ENCODE measurements at regions of chr22 and their contacts with region 1.

Region 1: DNA sequence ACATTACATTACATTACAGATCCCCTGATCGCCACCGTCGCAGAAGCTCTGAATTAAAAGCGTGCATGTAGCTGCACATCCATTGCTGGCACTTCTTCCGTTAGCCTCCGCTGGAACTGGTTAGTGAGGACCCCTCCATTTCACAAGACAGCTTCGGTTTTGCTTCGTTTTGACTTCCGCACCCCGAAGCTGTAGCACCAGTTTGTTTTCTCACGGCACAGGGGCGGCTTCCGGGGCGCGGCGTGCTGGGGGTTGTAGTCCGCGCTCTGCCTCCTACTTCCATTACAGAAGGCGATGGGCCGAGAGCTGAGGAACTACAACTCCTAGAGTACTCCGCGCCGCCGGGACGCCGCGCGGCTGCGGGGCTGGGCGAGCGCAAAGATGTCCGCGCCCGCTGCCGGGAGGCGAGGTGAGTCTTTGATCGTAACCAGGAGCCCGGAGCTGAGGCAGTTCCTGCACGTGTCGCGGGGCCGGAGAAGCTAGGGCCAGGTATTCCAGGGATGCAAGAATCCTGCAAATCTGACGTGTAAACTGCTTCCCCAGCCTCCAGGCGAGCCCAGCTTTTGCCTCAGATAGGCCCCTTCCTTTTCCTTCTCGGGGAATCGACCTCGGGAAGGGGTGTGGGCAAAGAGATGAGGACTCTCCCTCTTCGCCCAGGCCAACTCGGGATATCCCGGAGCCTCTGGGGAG is at the start of gene PEX26:
- DNase-seq: peak; percentile 95
- H3K4me3 Mint-ChIP-seq: peak within 1 kb of the TSS; percentile 90
- H3K27ac Mint-ChIP-seq: peak within 1 kb of the TSS; percentile 92
- H3K4me1 Mint-ChIP-seq: peaks cover 50% of the 10 kb centered on the region
- H3K27me3 Mint-ChIP-seq: peaks cover 2% of the 10 kb centered on the region
- total RNA-seq, gene PEX26: 50.0 and 54.4 TPM in 2 replicates

Region 2: DNA sequence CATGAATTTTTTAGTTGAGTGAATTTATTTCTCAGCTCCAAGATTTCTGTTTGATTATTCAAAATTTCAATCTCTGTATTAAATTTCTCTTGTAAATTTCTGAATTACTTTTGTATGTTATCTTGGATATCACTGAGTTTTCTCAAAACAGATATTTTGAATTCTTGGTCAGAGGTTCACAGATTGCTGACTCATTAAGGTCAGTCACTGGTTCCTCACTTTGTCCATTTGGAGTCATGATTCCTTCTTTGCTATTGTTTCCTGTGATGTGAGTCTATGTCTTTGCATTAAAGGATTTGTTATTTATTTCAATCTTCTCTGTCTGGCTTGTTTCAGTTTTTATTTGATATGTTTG is 1003.2 kb before region 1 on chr22:
- intact Hi-C with region 1: loop called (anchors 1 kb)
- DNase-seq: no peak
- H3K4me3 Mint-ChIP-seq: no peak overlapping the region
- H3K27ac Mint-ChIP-seq: no peak overlapping the region
- H3K4me1 Mint-ChIP-seq: peaks cover 21% of the 10 kb centered on the region
- H3K27me3 Mint-ChIP-seq: peaks cover 36% of the 10 kb centered on the region

Region 3: DNA sequence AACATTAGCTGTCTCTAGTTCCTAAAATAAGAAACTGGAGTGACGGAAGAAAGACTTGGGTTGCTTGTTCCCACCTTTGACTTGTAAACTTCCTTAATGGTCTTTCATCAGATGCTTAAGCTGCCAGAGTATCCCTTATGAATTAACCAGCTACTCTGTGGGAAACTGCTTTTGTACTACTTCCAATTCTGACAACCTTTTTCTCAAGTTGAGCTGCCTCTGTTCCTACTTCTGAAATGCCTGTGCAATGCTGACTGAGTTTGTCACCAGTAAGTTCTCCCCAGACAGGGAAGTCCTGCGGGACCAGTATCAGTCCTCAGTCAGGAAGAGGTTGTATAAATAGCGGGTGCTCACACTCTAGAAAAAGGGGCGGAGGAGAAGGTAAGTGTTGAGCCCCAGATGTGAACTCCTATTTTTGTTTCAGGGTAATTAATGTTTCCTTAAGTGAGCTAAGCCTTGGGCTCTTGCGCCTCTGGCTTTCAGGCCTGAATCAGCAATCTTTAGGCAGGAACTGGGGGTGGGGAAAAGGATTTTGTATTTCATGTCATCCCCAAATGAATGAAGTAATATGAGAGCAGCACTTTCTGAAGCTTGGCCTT is 641.3 kb before region 1 on chr22:
- intact Hi-C with region 1: no loop called
- DNase-seq: no peak
- H3K4me3 Mint-ChIP-seq: no peak overlapping the region
- H3K27ac Mint-ChIP-seq: no peak overlapping the region
- H3K4me1 Mint-ChIP-seq: no peaks in the 10 kb centered on the region
- H3K27me3 Mint-ChIP-seq: peaks cover 15% of the 10 kb centered on the region

Region 4: DNA sequence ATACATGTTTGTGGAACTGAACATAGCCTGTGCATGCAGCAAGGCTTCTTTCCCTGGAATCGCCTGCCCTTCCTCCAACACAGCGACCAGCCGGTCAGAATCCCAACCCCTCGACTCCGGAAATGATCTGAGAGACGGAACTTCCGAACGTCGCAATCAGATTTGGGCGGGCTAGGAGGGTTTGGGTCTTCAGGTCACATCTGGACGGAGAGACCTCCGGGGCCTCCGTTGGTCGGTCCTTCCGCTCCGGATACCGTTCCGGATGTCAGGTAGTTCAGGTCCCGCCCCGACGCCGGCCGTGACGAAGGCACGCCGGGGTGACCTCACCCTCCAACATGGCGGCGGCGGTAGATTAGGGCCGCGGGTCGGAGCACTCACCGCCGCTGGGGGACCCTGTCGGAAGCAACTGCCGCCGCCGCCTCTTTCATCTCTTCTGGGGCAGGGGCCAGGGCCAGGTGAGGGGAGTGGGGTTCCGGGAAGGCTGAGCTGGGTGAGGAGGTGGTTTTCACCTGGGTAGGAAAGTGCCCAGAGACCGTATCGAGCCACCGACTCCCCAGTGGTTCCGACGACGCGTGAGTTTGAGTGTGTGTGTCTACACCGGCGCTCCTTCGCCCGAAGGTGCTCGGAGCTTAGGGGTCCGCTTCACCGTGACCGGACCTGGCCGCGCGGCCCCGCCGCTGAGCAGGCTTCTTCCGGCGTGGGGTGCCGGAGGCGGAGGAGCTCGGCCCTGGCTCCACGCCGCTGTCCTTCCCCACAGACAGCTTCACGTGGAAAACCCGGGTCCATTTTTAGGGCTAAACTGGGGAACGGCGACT is 439.1 kb before region 1 on chr22 and contains the start of gene BCL2L13:
- intact Hi-C with region 1: loop called (anchors 1 kb)
- DNase-seq: peak; percentile 88
- H3K4me3 Mint-ChIP-seq: peak within 1 kb of the TSS; percentile 94
- H3K27ac Mint-ChIP-seq: peak within 1 kb of the TSS; percentile 95
- H3K4me1 Mint-ChIP-seq: peaks cover 29% of the 10 kb centered on the region
- H3K27me3 Mint-ChIP-seq: no peaks in the 10 kb centered on the region
- total RNA-seq, gene BCL2L13: 34.6 and 35.9 TPM in 2 replicates

Region 5: DNA sequence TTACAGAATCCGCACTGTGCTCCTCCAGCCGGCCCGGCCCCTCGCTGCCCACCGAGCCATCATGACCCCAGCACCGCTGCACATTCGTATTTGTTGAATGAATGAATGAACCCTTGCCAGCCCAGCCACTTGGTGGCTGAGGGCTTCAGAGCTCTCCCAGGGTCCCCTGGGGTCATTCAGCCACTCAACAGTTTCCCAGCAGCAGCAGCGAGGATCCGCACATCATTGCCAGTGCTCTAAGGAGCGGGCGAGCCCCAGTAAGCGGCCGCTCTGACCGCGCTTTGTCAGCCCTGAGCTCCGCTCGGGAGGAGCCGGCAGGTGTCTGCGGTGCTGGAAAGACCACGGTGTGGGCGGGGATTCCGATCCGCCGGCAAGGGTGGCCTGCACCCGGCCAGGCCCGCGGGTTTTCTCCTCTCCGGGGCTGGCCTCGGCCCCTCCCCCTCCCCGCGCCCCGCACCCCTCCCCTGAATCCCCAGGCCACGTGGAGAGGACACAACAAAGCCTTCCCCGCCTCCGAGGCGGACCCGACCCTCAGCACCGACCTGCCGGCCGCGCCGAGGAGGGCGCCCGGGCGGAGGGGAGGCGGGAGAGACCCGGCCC is 304.1 kb before region 1 on chr22:
- intact Hi-C with region 1: loop called (anchors 2 kb)
- DNase-seq: peak; percentile 67
- H3K4me3 Mint-ChIP-seq: peak overlapping the region; percentile 79
- H3K27ac Mint-ChIP-seq: peak overlapping the region; percentile 65
- H3K4me1 Mint-ChIP-seq: peaks cover 63% of the 10 kb centered on the region
- H3K27me3 Mint-ChIP-seq: peaks cover 14% of the 10 kb centered on the region

Region 6: DNA sequence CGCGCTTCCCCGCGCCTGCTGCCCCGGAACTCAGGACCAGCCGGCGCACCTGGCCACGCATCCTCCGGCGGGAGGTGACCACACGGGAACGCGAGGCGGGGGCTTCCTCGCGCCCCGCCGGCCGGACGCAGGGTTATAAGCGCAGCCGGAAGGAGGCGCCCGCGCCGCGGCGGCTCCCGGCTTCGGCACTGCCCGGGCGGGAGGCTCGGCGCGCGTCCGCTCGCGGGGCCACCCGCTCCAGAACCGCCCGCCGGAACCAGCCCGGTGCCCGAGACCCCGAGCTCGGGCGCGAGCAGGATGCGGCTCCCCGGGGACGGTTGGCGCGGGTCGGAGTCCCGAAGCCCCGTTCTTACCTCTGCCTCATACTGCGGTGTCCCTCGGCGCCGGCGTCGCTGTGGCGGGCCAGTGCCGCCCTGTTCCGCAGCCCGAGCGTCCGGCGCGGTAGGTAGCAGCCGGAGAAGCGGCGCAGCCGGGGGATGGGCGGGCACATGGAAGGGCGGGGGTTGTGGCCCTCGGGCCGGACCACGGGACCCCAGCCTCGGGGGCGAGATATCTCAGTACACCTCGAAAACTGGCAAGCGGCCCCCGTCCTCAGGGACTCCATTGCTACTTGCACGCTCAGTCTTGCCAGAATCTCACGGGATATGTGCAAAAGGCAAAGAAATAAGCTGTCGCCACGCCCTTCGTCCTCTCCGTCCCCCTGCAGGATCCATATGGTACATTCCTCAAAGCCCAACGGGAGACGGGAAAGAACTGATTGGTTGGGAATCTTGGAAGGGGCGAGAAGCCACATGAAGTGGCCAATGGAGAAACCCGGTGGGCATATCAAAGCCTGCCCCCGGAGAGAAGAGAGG is 76.5 kb before region 1 on chr22:
- intact Hi-C with region 1: loop called (anchors 1 kb)
- DNase-seq: peak; percentile 67
- H3K4me3 Mint-ChIP-seq: peak overlapping the region; percentile 92
- H3K27ac Mint-ChIP-seq: peak overlapping the region; percentile 95
- H3K4me1 Mint-ChIP-seq: peaks cover 44% of the 10 kb centered on the region
- H3K27me3 Mint-ChIP-seq: peaks cover 29% of the 10 kb centered on the region

Region 7: DNA sequence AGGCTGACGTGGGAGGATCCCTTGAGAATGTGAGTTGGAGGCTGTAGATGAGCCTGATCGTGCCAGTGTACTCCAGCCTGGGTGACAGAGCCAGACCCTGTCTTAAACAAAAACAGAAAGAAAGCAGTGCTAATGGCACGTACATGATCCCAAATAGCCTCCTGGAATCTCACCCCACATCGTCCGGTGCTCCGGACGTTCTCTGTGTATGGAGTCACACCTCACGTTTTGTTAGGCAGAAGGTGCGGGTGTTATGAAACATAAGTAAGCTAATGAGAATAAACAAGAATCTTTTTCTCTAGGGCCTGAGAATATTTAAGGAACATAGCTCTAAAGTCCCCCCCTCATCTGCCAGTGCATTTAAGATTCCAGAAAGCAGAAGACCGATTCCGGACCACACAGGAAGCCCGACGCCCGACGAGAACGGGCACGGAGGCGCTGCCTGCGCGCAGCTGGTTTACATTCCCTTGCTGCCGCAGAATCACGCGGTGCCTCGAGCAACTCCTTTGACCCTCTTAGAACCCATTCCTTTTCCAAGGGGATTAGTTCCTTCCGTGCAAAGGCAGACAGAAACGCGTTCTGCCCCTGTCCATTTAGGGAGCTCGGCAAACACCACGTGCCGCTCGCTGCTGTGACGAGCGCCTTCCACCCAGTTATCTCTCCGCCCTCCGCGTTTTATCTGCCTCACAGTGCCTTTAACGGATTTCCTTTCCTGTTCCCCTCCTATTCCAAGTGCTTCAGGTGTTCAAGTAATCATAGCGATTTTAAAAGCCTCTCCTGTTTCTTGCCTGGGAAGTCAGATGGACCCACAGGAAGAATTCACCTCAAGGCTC is 29.5 kb before region 1 on chr22:
- intact Hi-C with region 1: no loop called
- DNase-seq: no peak
- H3K4me3 Mint-ChIP-seq: no peak overlapping the region
- H3K27ac Mint-ChIP-seq: no peak overlapping the region
- H3K4me1 Mint-ChIP-seq: no peaks in the 10 kb centered on the region
- H3K27me3 Mint-ChIP-seq: peaks cover 9% of the 10 kb centered on the region

Region 8: GRCh38 chr22:18104566-18104965 is 26.8 kb after region 1 on chr22:
- intact Hi-C with region 1: loop called (anchors 1 kb)
- DNase-seq: no peak
- H3K4me3 Mint-ChIP-seq: no peak overlapping the region
- H3K27ac Mint-ChIP-seq: peak overlapping the region; percentile 56
- H3K4me1 Mint-ChIP-seq: peaks cover 30% of the 10 kb centered on the region
- H3K27me3 Mint-ChIP-seq: peaks cover 15% of the 10 kb centered on the region